ENCODE measurements at regions of chr1 and their contacts with region 1.

Region 1: DNA sequence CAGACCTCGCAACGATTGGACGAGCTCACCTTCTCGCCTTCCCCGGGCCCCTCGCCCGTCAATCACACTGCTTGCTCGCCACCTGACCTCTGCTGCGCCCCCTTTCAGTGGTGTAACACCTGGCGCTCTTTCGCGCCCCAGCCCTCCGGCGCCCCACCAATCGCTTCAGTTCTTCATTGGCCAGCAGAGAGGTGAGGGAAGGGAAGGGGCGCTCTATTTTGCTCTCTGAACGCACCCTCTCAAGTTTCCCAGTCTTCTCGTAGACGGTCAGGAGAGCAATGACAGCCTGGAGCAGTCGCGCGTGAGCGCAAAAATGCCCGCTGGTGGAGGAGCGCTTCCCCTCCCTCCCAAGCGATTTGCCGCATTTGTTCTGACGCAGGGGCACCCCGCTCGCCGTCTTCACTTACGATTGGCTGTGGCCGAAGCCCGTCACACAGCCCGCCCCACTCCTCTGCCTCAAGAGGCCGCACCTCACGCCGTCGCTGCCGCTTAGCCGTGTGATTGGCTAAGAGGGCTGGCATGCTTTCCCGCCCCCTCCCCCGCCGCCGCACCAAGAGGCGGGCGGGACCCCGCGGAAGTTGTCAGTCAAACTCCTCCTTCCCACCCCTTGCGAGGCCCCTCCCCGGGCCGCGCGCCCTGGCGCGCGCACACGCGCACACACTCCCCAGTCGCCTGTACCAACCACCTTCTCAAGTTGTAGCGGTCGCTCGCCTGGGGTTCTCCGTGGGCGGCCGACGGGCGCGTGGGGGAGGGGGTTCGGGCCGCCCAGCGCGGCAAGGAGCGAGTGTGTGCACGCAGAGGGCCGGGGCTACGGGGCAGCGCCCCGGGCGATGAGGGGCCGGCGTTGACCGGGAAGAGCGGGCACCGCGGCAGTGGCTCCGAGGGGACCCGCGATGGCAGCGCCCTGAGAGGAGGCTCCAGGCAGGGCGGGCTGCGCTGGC is at the start of gene PPP2R5A:
- DNase-seq: peak; percentile 100
- H3K4me3 ChIP-seq: peak within 1 kb of the TSS; percentile 82 to 98 (median 88)
- H3K27ac ChIP-seq: peak within 1 kb of the TSS; percentile 96 to 100 (median 100)
- H3K4me1 ChIP-seq: peaks cover 0 to 38% (median 30%) of the 10 kb centered on the region in 4 donors
- H3K27me3 ChIP-seq: no peaks in the 10 kb centered on the region
- CTCF ChIP-seq: peak in 3 of 4 experiments; percentile 12 to 21 (median 13)
- EP300 ChIP-seq: peak in 2 of 4 donors; percentile 5 to 59
- POLR2A ChIP-seq: peak; percentile 87 to 89
- total RNA-seq, gene PPP2R5A: 25.9 to 47.1 (median 31.4) TPM

Region 2: GRCh38 chr1:212035123-212035834 is 249.7 kb before region 1 on chr1 and contains the starts of genes DTL and INTS7:
- intact Hi-C with region 1: loop called (anchors 1 kb)
- DNase-seq: peak; percentile 99
- H3K4me3 ChIP-seq: peak within 1 kb of the TSS; percentile 47 to 62 (median 58)
- H3K27ac ChIP-seq: peak within 1 kb of the TSS; percentile 84 to 90 (median 86)
- H3K4me1 ChIP-seq: peaks cover 0 to 22% (median 16%) of the 10 kb centered on the region in 4 donors
- H3K27me3 ChIP-seq: no peaks in the 10 kb centered on the region
- CTCF ChIP-seq: peak; percentile 93 to 98 (median 97)
- EP300 ChIP-seq: no peak
- POLR2A ChIP-seq: no peak
- total RNA-seq, gene DTL: 0.36 to 0.41 TPM in 2 of 4 donors, not detected in the others
- total RNA-seq, gene INTS7: 5.6 to 13.2 (median 6.9) TPM

Region 3: DNA sequence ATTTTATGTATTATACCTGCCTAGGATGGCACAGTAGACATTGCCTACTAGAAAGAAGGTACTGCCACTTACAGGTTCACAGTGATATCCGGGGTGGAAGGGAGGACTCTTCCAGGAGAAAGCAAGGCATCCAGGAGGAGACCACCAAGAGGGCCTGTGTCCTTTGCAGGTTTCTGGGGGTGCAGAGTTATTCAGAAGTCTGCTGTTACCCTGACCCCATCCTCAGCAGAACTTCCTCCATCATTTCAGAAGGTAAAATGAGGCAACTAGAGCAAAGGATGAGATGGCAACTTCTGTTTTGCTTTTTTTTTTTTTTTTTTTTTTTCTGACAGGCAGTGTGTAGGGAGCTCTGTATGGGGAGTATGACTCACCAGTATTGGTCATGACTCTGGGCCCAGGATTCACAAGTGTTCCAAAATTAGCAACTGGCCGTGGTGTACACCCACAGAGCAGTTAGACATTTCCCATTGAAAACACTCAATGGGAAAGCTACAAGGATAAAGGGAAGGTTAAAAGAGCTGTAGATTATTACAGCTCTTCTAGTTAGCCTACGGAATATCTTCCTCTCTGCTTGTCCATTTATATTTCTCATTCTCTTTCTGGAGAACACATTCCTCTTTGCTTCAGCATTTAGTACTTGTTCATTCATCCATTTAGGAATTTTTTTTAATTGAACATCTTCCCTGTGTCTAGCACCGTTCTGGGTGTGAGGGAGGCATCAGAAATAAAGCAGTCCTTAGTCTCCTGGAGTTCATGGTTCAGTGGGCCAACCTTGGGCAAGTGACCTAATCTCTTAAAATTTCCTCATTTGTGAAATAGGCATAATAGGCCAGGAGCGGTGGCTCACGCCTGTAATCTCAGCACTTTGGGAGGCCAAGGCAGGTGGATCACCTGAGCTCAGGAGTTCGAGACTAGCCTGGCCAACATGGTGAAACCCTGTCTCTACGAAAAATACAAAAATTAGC is 50.3 kb before region 1 on chr1:
- intact Hi-C with region 1: loop called (anchors 2 kb)
- DNase-seq: peak; percentile 83
- H3K4me3 ChIP-seq: no peak overlapping the region
- H3K27ac ChIP-seq: peak overlapping the region; percentile 59 to 80 (median 62)
- H3K4me1 ChIP-seq: peaks cover 0 to 29% (median 27%) of the 10 kb centered on the region in 4 donors
- H3K27me3 ChIP-seq: no peaks in the 10 kb centered on the region
- CTCF ChIP-seq: no peak
- EP300 ChIP-seq: no peak
- POLR2A ChIP-seq: no peak

Region 4: DNA sequence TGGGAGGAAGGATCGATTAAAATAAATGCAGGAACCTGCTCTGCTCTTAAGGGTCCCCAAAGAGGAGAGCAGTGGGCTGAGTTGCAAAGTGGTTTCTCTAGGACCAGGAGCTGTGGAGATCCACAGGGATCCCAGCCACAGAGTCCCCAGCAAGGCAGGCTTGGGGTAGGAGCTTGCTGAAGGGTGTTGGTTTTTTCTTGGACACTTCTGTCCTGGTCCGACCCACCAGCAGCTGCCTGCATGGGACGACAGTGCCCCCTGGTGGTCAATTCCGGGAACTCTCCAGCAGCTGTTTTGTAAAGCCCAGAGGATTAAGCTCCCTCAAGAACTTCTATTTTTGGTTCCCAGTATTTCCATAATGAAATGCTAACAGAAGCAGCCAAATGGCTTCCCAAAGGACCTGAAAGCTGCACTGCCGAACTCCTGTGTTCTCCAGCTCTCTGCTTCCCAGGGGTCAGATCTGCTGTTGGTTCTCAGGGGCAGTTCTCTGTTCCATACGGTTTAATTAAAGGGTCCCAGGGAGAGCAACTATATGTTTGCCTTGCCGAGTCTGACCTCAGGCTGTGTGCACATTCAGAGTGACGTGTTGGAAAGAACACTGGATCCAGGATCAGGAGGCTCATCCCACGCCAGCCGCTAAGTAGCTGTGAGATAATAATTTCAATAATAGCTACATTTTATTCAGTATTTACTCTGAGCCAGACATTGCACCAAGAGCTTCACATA is 171.0 kb after region 1 on chr1:
- intact Hi-C with region 1: loop called (anchors 5 kb)
- DNase-seq: peak; percentile 92
- H3K4me3 ChIP-seq: no peak overlapping the region
- H3K27ac ChIP-seq: peak overlapping the region in 3 of 4 donors; percentile 35 to 73 (median 55)
- H3K4me1 ChIP-seq: peaks cover 0 to 21% (median 12%) of the 10 kb centered on the region in 4 donors
- H3K27me3 ChIP-seq: no peaks in the 10 kb centered on the region
- CTCF ChIP-seq: peak; percentile 84 to 99 (median 93)
- EP300 ChIP-seq: no peak
- POLR2A ChIP-seq: no peak

Region 5: GRCh38 chr1:212791676-212792395 is 506.8 kb after region 1 on chr1 and contains the starts of genes NSL1 and TATDN3:
- intact Hi-C with region 1: loop called (anchors 10 kb)
- DNase-seq: peak; percentile 94
- H3K4me3 ChIP-seq: peak within 1 kb of the TSS; percentile 69 to 92 (median 78)
- H3K27ac ChIP-seq: peak within 1 kb of the TSS; percentile 89 to 98 (median 95)
- H3K4me1 ChIP-seq: peaks cover 0 to 41% (median 29%) of the 10 kb centered on the region in 4 donors
- H3K27me3 ChIP-seq: no peaks in the 10 kb centered on the region
- CTCF ChIP-seq: no peak
- EP300 ChIP-seq: peak in 1 of 4 donors; percentile 47
- POLR2A ChIP-seq: peak; percentile 56 to 73
- total RNA-seq, gene NSL1: 26.0 to 50.4 (median 30.2) TPM
- total RNA-seq, gene TATDN3: 9.1 to 25.7 (median 17.8) TPM

Measured in sigmoid colon (tissue), 7 donors.